Activated CD4-positive, alpha-beta memory T cell treated with anti-CD3 and anti-CD28 coated beads, Interleukin-2, amount 10 ng/mL, durations not matched to agents 7 days and 5 days (primary cell): ENCODE measurements at regions of chr3 and their contacts with region 1.

Region 1: DNA sequence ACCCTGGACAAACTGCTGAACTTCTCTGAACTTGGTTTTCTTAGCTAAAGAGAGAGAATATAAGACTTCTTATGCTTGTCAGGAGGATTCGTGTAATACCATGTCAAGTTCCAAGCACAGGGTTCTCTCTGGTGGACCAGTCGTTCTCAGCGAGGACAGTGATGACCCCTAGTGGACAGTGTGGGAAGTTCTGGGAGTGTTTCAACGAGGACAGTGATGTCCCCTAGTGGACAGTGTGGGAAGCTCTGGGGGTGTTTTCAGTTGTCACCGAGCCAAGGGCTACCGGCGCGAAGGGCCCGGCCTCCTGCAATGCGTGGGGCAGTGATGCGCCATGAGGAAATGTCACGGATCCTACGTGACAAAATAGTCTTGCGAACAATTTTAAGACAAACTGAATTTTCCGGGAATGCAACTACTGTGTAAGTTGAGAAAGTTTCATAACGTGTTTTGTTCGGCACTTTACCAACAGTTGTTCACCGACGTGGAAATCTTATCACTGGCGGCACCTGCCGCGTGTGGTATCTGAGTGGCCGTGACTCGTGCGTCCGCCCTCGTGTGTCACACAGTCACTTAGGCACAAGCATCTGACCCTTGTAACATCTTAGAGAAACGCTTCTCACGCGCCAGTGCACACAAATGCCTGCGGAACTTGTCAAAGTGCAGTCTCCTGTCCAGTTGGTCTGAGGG is 39.3 kb upstream of the MUC4 start:
- DNase-seq: peak; percentile 91
- H3K4me3 Mint-ChIP-seq: peak overlapping the region; percentile 2
- H3K27ac Mint-ChIP-seq: no peak overlapping the region
- H3K4me1 Mint-ChIP-seq: peaks cover 7% of the 10 kb centered on the region
- H3K27me3 Mint-ChIP-seq: no peaks in the 10 kb centered on the region

Region 2: GRCh38 chr3:195738274-195739044 is 112.5 kb before region 1 on chr3:
- CTCF ChIA-PET with region 1: interaction called, 10 read pairs
- POLR2A ChIA-PET with region 1: no interaction called
- DNase-seq: no peak
- H3K4me3 Mint-ChIP-seq: no peak overlapping the region
- H3K27ac Mint-ChIP-seq: no peak overlapping the region
- H3K4me1 Mint-ChIP-seq: no peaks in the 10 kb centered on the region
- H3K27me3 Mint-ChIP-seq: peaks cover 5% of the 10 kb centered on the region

Region 3: DNA sequence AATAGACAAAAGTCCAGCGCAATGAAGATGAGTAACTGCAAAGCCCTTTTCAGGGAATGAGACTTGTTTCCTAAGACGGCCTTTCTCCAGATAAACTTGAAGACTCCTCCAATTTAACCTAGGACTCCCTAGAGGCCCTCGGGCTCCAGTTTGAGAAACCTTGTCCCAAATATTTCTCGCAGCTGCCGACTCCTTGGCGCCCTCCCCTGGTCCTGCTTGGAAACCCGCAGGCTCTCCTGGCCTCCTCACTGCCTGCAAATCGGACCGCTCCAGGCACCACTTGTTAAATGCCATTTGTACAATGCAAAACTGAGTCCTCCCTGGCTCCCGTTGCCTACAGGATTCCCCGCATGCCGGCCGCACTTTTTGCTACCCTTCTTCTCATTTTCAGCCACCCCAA is 76.1 kb before region 1 on chr3:
- CTCF ChIA-PET with region 1: no interaction called
- POLR2A ChIA-PET with region 1: no interaction called
- DNase-seq: no peak
- H3K4me3 Mint-ChIP-seq: no peak overlapping the region
- H3K27ac Mint-ChIP-seq: no peak overlapping the region
- H3K4me1 Mint-ChIP-seq: peaks cover 15% of the 10 kb centered on the region
- H3K27me3 Mint-ChIP-seq: no peaks in the 10 kb centered on the region

Region 4: DNA sequence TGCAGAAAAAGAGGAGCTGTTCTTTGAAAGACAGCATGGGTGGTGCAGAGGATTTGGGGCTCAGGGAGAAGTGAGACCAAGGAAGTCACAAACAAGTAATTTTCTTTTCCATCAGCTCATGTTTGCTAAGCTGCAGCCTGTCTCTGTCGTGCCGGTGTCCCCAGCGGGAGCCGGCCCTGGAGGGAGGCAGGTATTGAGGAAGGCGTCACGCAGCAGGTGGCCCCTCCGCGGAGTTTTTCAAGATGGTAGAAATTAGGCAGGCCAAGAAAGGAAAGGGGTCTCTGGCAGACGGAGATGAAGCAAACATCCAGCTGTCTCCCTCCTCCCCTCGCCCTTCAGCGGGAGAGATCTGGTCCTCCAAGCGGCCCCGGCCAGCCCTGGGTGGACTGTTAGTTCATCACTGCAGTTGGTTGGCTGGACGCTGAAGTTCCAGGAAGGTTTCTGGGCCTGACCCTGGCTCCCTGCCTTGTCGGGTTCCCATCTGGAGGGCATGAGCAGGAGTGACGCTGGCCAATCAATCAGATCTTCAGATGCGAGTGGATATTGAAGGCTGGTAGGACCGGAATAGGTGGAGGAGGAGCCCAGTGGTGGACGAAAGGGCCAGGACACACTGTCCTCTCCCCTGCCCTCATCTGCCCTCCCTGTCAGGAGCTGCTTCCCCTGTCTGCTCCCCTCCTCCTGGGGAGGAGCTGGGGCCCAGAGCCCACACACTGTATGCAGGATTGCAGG is 11.6 kb before region 1 on chr3:
- CTCF ChIA-PET with region 1: interaction called, 36 read pairs
- POLR2A ChIA-PET with region 1: no interaction called
- DNase-seq: no peak
- H3K4me3 Mint-ChIP-seq: no peak overlapping the region
- H3K27ac Mint-ChIP-seq: no peak overlapping the region
- H3K4me1 Mint-ChIP-seq: no peaks in the 10 kb centered on the region
- H3K27me3 Mint-ChIP-seq: peaks cover 10% of the 10 kb centered on the region

Region 5: DNA sequence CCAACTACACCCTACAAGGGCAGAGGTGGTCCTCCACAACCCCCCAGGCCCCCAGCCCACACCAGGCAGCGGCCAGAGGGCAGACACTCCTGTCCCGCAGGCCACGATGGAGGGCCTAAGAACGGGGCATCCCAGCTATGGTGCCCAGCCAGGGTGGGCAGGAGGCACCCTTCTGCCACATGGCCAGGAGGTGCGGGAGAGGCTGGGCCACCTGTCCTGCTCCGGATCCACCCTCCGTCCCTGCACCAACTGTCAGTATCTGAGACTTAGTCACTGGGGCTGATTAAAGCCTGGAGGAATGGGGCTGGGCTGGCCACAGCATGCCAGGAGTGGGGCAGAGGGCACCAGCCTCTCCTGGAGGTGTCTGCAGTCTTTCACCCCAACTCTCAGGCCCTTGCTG is 19.4 kb after region 1 on chr3:
- CTCF ChIA-PET with region 1: no interaction called
- POLR2A ChIA-PET with region 1: no interaction called
- DNase-seq: no peak
- H3K4me3 Mint-ChIP-seq: no peak overlapping the region
- H3K27ac Mint-ChIP-seq: no peak overlapping the region
- H3K4me1 Mint-ChIP-seq: no peaks in the 10 kb centered on the region
- H3K27me3 Mint-ChIP-seq: no peaks in the 10 kb centered on the region

Region 6: GRCh38 chr3:195894780-195895607 is 44.0 kb after region 1 on chr3:
- CTCF ChIA-PET with region 1: interaction called, 61 read pairs
- POLR2A ChIA-PET with region 1: no interaction called
- DNase-seq: peak; percentile 73
- H3K4me3 Mint-ChIP-seq: peak overlapping the region; percentile 88
- H3K27ac Mint-ChIP-seq: peak overlapping the region; percentile 90
- H3K4me1 Mint-ChIP-seq: peaks cover 43% of the 10 kb centered on the region
- H3K27me3 Mint-ChIP-seq: no peaks in the 10 kb centered on the region

Region 7: DNA sequence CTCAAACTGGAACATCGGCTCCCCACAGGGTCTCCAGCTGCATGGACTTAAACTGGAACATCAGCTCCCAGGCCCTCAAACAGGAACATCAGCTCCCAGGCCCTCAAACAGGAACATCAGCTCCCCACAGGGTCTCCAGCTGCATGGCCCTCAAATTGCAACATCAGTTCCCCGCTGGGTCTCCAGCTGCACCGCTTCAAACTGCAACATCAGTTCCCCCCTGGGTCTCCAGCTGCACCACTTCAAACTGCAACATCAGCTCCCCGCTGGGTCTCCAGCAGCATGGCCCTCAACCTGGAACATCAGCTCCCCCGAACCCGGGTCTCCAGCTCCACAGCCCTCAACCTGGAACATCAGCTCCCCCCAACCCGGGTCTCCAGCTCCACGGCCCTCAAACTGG is 148.9 kb after region 1 on chr3:
- CTCF ChIA-PET with region 1: interaction called, 14 read pairs
- POLR2A ChIA-PET with region 1: no interaction called
- DNase-seq: no peak
- H3K4me3 Mint-ChIP-seq: no peak overlapping the region
- H3K27ac Mint-ChIP-seq: no peak overlapping the region
- H3K4me1 Mint-ChIP-seq: no peaks in the 10 kb centered on the region
- H3K27me3 Mint-ChIP-seq: peaks cover 17% of the 10 kb centered on the region